Astrocyte of the cerebellum (primary cell): ENCODE measurements at regions of chr7 and their contacts with region 1.

Region 1: GRCh38 chr7:1323178-1324030 is 90.7 kb downstream of the UNCX start:
- DNase-seq: no peak
- H3K4me3 ChIP-seq: no peak overlapping the region
- CTCF ChIP-seq: no peak

Region 2: GRCh38 chr7:1357601-1358271 is 34.3 kb after region 1 on chr7:
- in situ Hi-C with region 1: no loop called
- DNase-seq: no peak
- H3K4me3 ChIP-seq: no peak overlapping the region
- CTCF ChIP-seq: no peak

Region 3: GRCh38 chr7:1368682-1369571 is 45.5 kb after region 1 on chr7:
- in situ Hi-C with region 1: no loop called
- DNase-seq: no peak
- H3K4me3 ChIP-seq: no peak overlapping the region
- CTCF ChIP-seq: peak; percentile 16

Region 4: GRCh38 chr7:1386623-1387220 is 63.3 kb after region 1 on chr7:
- in situ Hi-C with region 1: loop called (anchors 5 kb)
- DNase-seq: no peak
- H3K4me3 ChIP-seq: no peak overlapping the region
- CTCF ChIP-seq: no peak

Region 5: GRCh38 chr7:1397491-1398327 is 74.3 kb after region 1 on chr7:
- in situ Hi-C with region 1: no loop called
- DNase-seq: no peak
- H3K4me3 ChIP-seq: no peak overlapping the region
- CTCF ChIP-seq: no peak